Left cardiac atrium (tissue), 4 donors: ENCODE measurements at regions of chr4 and their contacts with region 1.

Region 1: GRCh38 chr4:52721968-52722815 is 29.0 kb downstream of the ERVMER34-1 start:
- DNase-seq: peak; percentile 95
- ATAC-seq: peak; percentile 99 to 100

Region 2: DNA sequence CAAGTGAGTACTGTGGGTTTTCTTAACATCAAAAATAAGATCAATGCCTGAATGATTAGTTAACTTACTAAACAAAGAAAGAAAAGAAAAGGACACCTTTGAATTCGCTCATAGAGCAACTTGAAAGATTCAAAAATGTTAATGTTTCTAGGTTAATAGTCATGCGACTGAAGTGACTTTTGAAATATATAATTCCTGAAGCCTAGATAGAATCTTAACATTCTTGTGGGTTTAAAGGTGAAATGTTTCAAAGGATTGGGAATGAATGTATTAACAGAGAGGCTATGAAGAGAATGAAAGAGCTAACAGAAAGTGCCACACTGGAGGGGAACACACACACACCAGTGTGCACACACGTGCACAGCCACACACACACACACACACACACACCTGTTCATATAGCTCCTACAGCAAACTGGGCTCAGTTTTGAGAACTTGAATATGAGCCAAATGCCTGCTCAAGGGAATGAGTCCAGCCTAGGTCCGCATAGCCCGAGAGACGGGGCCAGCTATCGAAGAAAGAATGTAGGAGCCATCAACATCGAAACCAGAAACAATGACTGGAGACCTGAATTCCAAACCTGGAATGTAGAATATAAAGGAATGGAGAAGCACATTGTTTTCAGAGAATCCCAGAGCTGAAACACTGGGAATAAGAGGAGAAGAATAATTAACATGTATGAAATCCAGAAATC is 66.5 kb after region 1 on chr4:
- intact Hi-C with region 1: no loop called
- DNase-seq: no peak
- ATAC-seq: no peak

Region 3: GRCh38 chr4:52861879-52862616 is 139.9 kb after region 1 on chr4 and contains the start of gene RASL11B:
- intact Hi-C with region 1: loop called (anchors 5 to 10 kb)
- DNase-seq: peak; percentile 88
- ATAC-seq: peak; percentile 96 to 98
- total RNA-seq, gene RASL11B: 3.7 to 8.0 TPM